ENCODE measurements at regions of chr3 and their contacts with region 1.

Region 1: GRCh38 chr3:14452679-14453367 is 50.4 kb downstream of the SLC6A6 start:
- DNase-seq: peak; percentile 81
- H3K4me3 Mint-ChIP-seq: peak overlapping the region; percentile 36
- H3K27ac Mint-ChIP-seq: peak overlapping the region; percentile 80
- H3K4me1 Mint-ChIP-seq: peaks cover 54% of the 10 kb centered on the region
- H3K27me3 Mint-ChIP-seq: no peaks in the 10 kb centered on the region
- CTCF ChIP-seq: no peak

Region 2: DNA sequence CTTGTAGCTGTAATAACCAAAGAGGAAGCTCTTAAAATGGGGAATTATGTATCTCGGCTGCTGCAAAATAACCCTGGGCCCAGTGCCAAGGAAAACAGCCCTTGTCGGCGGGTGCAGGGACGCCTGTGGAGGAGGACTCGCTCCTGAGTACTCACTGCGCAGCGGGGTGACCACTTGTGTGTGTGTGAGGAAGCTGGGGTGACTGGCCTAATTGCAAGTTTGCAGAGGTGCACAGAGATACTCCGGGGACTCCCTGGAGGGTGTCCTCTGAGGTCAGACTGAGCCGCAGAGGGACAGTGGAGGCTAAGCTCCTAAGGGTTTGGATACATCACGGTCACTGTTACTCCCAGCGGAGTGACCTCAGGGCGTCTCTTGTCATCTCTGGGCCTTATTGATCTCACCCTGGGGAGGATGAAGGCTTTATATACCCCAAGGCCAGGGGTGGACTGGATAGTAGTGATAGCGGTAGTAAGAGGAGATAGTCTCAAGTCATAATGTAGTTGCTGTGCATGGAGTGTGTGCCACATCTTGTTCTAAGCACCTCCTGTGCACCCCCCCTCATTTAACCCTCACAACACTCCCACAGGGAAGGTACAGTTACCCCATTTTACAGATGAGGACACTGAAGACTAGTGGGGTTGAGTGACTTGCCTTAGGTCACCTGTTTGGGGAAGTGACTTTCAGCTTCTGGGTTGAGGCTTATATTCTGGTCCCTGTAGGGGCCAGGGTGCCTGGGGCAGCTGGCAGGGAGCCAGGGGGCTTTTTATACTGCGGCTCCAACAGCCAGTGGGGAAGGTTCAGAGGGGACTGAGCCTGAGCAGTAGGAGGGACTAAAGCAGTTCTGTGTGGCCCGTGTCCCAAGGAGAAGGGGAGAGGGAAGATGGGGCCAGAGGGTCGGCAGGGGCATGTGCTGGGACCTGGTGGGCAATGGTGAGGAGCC is 13.0 kb before region 1 on chr3:
- CTCF ChIA-PET with region 1: interaction called, 6 read pairs
- intact Hi-C with region 1: loop called (anchors 2 kb)
- DNase-seq: peak; percentile 75
- H3K4me3 Mint-ChIP-seq: peak overlapping the region; percentile 48
- H3K27ac Mint-ChIP-seq: no peak overlapping the region
- H3K4me1 Mint-ChIP-seq: peaks cover 57% of the 10 kb centered on the region
- H3K27me3 Mint-ChIP-seq: no peaks in the 10 kb centered on the region
- CTCF ChIP-seq: no peak

Region 3: DNA sequence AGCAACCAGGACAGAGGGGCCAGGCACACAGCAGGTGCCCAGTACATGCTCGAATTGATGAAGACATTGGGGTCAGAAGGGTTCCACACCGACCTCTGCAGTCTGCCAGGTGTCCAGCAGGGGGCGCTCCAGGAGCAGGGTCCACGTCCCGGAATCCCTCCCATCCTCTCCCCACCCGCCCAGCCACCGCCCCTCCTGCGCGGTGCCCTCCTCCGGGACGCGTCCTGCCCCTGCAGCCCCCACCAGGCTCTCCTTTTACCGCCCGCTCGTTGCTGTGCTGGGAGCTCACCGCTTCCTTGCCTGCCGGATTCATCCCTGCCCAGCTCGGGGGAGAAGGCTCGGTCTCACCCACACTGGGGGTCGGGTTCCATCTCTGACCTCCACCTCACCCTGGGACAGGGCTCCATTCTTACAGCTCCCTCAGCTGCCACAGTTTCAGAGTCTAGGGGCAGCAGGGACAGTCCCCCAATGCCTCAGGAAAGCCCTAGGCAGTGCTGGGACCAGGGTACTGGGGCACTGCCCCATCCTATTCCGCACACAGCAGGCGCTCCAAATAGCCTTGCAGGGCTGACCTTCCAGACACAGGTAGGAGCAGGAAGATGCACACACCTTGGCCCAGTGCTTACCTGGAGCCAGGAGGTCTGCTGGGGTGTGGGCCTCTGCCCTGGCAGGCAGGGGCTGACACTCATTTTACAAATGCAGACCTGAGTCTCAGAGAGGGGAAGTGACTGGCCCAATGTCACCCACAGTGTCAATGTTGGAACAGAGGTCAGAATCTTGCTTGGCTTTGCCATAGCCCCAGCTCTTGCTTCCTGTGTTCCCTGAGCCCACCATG is 56.4 kb after region 1 on chr3:
- CTCF ChIA-PET with region 1: no interaction called
- intact Hi-C with region 1: no loop called
- DNase-seq: peak; percentile 82
- H3K4me3 Mint-ChIP-seq: no peak overlapping the region
- H3K27ac Mint-ChIP-seq: no peak overlapping the region
- H3K4me1 Mint-ChIP-seq: no peaks in the 10 kb centered on the region
- H3K27me3 Mint-ChIP-seq: peaks cover 31% of the 10 kb centered on the region
- CTCF ChIP-seq: peak; percentile 92

Region 4: GRCh38 chr3:14616606-14617507 is 164.0 kb after region 1 on chr3:
- CTCF ChIA-PET with region 1: no interaction called
- intact Hi-C with region 1: no loop called
- DNase-seq: no peak
- H3K4me3 Mint-ChIP-seq: no peak overlapping the region
- H3K27ac Mint-ChIP-seq: no peak overlapping the region
- H3K4me1 Mint-ChIP-seq: no peaks in the 10 kb centered on the region
- H3K27me3 Mint-ChIP-seq: peaks cover 64% of the 10 kb centered on the region
- CTCF ChIP-seq: no peak